HAP-1 (cell line): ENCODE measurements at regions of chr7 and their contacts with region 1.

Region 1: GRCh38 chr7:131040467-131040932 is 287.2 kb upstream of the MKLN1 start:
- DNase-seq: peak; percentile 65 to 74
- H3K4me3 ChIP-seq: no peak overlapping the region
- H3K4me1 ChIP-seq: peaks cover 6% of the 10 kb centered on the region
- H3K27me3 ChIP-seq: no peaks in the 10 kb centered on the region

Region 2: DNA sequence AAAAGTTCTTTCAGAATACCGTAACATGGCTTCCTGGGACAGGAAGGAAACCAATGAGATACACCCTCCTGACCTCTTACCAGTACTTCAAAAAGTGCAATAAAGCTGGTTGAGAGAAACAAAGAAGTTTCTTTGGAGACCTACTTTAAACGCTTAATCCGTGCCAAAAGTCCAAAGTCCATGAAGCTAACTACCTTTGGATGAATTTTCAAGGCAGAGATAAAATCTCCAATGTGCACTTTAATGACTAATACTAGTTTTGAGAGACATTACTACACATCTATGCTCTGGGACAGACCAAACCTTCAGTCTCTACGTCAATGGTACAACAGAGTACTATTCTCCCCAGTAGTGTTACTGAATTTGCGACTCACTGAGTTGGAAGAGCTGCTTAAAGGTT is 1133.8 kb before region 1 on chr7:
- in situ Hi-C with region 1: no loop called
- DNase-seq: peak in 1 of 2 experiments; percentile 50
- H3K4me3 ChIP-seq: no peak overlapping the region
- H3K4me1 ChIP-seq: peaks cover 82% of the 10 kb centered on the region
- H3K27me3 ChIP-seq: no peaks in the 10 kb centered on the region

Region 3: GRCh38 chr7:130896898-130897514 is 143.5 kb before region 1 on chr7:
- in situ Hi-C with region 1: loop called (anchors 5 kb)
- DNase-seq: peak; percentile 72 to 84
- H3K4me3 ChIP-seq: no peak overlapping the region
- H3K4me1 ChIP-seq: no peaks in the 10 kb centered on the region
- H3K27me3 ChIP-seq: no peaks in the 10 kb centered on the region

Region 4: DNA sequence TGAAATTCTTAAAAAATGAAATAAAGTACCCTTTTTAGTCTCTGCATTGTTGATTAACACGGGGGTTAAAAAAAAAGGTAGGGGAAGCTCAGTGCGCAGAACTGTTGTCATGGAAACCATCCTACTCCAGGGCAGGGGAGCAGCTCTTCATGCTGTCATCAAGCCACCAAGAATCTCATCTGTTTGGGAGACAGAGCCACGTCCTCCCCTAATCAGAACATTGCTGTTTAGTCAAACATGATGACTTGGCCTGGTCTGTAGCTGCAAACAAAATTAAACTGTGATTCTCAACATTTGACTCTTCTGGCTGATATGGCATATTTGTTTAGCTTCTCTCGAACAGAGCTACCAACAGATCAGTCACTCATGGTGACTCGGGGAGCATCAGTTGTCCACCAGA is 52.1 kb before region 1 on chr7:
- in situ Hi-C with region 1: loop called (anchors 5 kb)
- DNase-seq: no peak
- H3K4me3 ChIP-seq: no peak overlapping the region
- H3K4me1 ChIP-seq: no peaks in the 10 kb centered on the region
- H3K27me3 ChIP-seq: no peaks in the 10 kb centered on the region